ENCODE measurements at regions of chr22 and their contacts with region 1.

Region 1: DNA sequence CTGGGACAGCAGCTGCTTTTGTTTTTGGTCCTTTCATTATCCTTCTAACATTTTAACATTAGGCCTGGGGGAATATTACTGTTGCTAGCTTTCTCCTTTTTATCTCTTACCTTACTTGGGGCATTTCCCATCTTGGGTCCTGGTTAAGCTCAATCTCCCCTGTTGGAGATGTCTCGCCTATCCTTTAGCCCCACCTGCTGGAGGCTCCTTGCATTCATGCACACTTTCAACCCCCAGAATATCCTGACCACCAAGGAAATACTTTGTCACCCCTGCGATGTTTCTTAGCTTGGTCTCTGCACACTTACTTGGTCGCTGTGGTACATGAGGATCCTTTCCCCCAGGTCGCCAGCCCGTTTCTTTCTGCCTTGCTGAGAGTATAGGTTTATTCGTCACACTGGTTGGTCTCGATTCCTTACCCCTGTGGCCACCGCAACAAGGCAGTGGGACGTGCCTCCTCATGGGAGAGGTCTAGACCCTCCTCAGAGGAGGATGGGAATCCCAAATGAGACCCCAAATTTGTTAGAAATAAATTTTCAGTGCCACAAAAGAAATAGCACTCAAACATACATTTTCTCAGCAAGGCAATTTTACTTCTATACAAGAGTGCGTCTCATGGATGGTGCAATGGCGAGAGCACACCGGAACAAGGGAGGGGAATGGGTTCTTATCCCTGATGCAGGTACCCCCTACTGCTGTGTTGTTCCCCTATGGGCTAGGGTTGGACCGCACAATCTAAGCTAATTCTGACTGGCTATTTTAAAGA is 5.4 kb upstream of the TXN2 start:
- DNase-seq: peak; percentile 68
- ATAC-seq: 0 out of 2 replicates have a peak, but pooled peaks have one; percentile 22
- H3K4me3 ChIP-seq: no peak overlapping the region
- H3K27ac ChIP-seq: no peak overlapping the region
- H3K4me1 ChIP-seq: peaks cover 1% of the 10 kb centered on the region
- H3K27me3 ChIP-seq: no peaks in the 10 kb centered on the region
- CTCF ChIP-seq: peak; percentile 83
- POLR2A ChIP-seq: 0 out of 2 replicates have a peak, but pooled peaks have one; percentile 29
- RAD21 ChIP-seq: peak; percentile 92

Region 2: GRCh38 chr22:36381513-36382128 is 105.2 kb before region 1 on chr22:
- CTCF ChIA-PET with region 1: interaction called, 3 read pairs
- POLR2A ChIA-PET with region 1: interaction called, 10 read pairs
- dilution Hi-C with region 1: no loop called
- in situ Hi-C with region 1: no loop called
- intact Hi-C with region 1: no loop called
- DNase-seq: peak; percentile 7
- ATAC-seq: no peak
- H3K4me3 ChIP-seq: no peak overlapping the region
- H3K27ac ChIP-seq: no peak overlapping the region
- H3K4me1 ChIP-seq: peaks cover 28% of the 10 kb centered on the region
- H3K27me3 ChIP-seq: no peaks in the 10 kb centered on the region
- CTCF ChIP-seq: no peak
- POLR2A ChIP-seq: no peak
- RAD21 ChIP-seq: no peak

Region 3: DNA sequence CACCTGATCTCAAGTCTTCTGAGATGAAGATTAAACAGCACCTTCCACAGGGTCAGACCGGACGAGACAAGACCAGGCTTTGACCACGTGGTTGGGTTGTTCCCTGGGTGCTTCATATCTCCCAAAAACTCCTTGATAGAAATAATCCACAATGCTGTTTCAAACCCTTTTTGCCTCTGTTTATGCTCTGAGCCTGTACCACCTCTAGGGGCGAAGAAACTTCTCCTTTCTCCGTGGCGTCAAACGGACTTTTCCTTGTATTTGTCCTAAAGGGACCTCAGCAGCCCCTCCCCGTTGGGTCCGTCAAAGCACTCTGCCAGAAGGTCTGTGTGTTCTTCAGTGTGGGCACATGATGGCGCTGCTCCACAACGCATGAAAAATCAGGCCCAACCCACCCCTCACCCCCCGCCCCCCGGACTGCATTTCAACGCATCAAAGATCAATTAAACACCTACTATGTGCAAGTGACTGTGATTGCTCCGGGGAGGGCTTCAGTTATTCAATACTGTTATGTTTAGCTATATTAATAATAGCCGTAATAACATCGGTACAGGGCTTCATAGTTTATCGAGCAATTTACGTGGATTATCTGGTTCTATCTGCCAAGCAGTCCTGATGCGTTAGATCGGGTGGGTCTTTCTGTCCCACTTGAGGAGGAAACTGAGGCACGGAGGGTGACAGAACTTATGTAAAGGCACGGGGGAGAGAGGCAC is 59.4 kb after region 1 on chr22:
- CTCF ChIA-PET with region 1: no interaction called
- POLR2A ChIA-PET with region 1: no interaction called
- dilution Hi-C with region 1: no loop called
- in situ Hi-C with region 1: no loop called
- intact Hi-C with region 1: no loop called
- DNase-seq: peak; percentile 62
- ATAC-seq: peak; percentile 70
- H3K4me3 ChIP-seq: no peak overlapping the region
- H3K27ac ChIP-seq: no peak overlapping the region
- H3K4me1 ChIP-seq: peaks cover 13% of the 10 kb centered on the region; the same call in 1 of the 2 replicates
- H3K27me3 ChIP-seq: peaks cover 9% of the 10 kb centered on the region
- CTCF ChIP-seq: peak; percentile 62
- POLR2A ChIP-seq: no peak
- RAD21 ChIP-seq: peak; percentile 71

Measured in IMR-90 (cell line).